ENCODE measurements at regions of chr4 and their contacts with region 1.

Region 1: GRCh38 chr4:174318829-174319764 is 35.4 kb downstream of the CEP44 start:
- DNase-seq: no peak
- ATAC-seq: no peak
- H3K4me3 Mint-ChIP-seq: no peak overlapping the region
- H3K27ac Mint-ChIP-seq: no peak overlapping the region
- H3K4me1 Mint-ChIP-seq: no peaks in the 10 kb centered on the region
- H3K27me3 Mint-ChIP-seq: no peaks in the 10 kb centered on the region

Region 2: GRCh38 chr4:174222266-174222872 is 96.7 kb before region 1 on chr4:
- CTCF ChIA-PET with region 1: interaction called, 20 read pairs
- POLR2A ChIA-PET with region 1: no interaction called
- DNase-seq: no peak
- ATAC-seq: peak; percentile 74
- H3K4me3 Mint-ChIP-seq: no peak overlapping the region
- H3K27ac Mint-ChIP-seq: no peak overlapping the region
- H3K4me1 Mint-ChIP-seq: peaks cover 9% of the 10 kb centered on the region
- H3K27me3 Mint-ChIP-seq: peaks cover 47% of the 10 kb centered on the region

Region 3: DNA sequence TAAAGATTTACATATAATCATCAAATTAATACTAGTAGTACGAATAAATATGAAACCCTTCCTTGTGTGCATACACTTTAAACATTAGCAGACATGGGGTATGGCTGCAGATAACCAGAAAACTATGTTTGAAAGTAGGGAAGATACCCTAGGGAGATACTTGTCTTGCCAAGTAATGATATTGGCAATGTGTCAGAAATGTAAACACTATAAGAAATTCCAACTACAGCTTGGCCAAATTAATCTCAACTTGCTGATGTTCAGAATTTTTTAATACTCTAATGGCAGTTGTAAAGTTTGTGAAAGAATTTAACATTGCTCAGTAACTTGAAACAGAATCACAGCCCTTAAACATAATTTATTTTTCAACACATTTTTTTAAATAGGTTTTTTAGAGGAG is 230.6 kb after region 1 on chr4:
- CTCF ChIA-PET with region 1: no interaction called
- POLR2A ChIA-PET with region 1: no interaction called
- DNase-seq: no peak
- ATAC-seq: no peak
- H3K4me3 Mint-ChIP-seq: no peak overlapping the region
- H3K27ac Mint-ChIP-seq: no peak overlapping the region
- H3K4me1 Mint-ChIP-seq: no peaks in the 10 kb centered on the region
- H3K27me3 Mint-ChIP-seq: peaks cover 2% of the 10 kb centered on the region

Measured in activated CD8-positive, alpha-beta T cell treated with anti-CD3 and anti-CD28 coated beads, Interleukin-2, amount 10 ng/mL, durations not matched to agents 7 days and 5 days (primary cell).